Left ventricle myocardium inferior (tissue), 1 donor: ENCODE measurements at regions of chr2 and their contacts with region 1.

Region 1: DNA sequence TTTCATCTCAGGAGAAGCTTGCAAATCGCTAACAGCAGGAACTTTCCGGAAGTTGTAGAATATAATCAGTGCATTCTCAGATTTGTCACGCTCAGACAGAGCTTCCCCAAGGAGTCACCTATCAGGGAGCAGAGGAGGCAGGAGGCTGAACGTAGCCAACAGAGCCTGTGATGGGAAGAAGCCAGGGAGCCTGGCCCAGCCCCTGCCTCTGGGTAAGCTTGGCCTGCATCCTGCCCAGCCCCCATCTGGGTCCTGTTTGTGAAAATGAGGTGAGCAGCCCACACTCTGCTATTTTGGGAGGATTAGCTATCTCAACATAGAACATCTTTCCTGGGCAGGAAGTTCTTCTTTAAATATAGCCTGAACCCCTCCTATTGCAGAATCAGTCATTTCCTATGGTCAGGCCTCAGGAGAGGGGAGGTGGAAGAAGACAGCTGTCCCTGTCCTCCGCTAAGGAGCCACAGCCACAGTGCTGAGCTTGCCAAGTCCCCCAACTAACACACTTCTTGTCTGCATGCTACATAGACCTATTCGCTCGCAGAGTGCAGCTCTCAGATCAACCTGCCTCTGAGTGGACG is 19.2 kb upstream of the PKDCC start:
- DNase-seq: no peak
- H3K4me3 ChIP-seq: no peak overlapping the region
- H3K27ac ChIP-seq: peak overlapping the region; percentile 71
- H3K4me1 ChIP-seq: peaks cover 44% of the 10 kb centered on the region
- H3K27me3 ChIP-seq: no peaks in the 10 kb centered on the region
- CTCF ChIP-seq: no peak

Region 2: DNA sequence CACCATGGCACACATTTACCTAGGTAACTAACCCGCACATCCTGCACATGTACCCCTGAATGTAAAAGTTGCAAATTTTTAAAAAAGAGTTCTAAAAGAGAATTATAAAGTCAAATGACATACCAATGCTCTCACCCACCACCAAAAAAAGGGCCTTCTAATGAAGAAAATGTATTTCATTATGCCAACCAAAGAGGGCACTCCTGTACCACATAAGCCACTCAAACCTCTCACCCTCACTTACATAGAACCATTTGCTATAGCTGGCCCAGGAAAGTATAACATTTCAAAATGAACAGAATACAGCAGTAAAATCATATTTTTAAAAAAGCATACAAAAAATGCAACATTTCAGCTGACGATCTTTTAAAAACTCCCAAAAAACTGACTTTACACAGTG is 222.4 kb before region 1 on chr2:
- intact Hi-C with region 1: no loop called
- DNase-seq: no peak
- H3K4me3 ChIP-seq: no peak overlapping the region
- H3K27ac ChIP-seq: no peak overlapping the region
- H3K4me1 ChIP-seq: no peaks in the 10 kb centered on the region
- H3K27me3 ChIP-seq: peaks cover 14% of the 10 kb centered on the region
- CTCF ChIP-seq: no peak

Region 3: DNA sequence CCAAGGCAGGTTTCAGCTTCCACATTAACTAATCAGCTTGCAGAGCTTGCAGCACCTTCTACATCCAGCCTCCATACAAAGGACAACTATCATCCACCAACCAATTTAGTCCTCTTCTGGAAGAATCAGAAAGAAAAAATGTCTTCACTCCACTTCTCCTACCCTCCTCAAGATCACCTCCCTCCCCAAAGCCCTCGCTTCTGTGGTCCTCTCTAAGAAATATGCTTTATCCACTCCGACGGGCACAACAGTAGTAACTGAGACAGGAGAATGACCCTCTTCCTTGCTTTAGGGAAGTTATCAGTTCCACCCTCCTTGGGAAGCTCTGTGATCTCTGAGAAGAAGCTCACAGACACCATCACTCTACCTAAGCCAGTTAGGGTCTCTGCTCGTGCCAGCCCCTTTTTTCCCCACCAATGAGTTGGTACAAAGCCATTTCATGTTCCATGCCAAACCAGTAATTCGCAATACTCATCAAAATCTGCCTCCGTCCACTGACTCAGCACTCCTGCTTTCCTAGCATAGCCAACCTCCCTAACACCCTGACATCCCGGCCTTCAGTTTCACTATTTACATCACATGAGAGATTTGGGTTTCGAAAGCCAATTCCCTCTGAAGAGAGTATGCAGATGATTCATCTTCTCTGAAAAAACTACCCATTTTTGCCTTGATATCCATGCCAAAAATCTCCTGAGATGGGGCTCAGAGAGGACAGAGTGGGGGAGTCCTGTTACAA is 94.9 kb before region 1 on chr2:
- intact Hi-C with region 1: loop called (anchors 10 kb)
- DNase-seq: no peak
- H3K4me3 ChIP-seq: no peak overlapping the region
- H3K27ac ChIP-seq: peak overlapping the region; percentile 78
- H3K4me1 ChIP-seq: peaks cover 54% of the 10 kb centered on the region
- H3K27me3 ChIP-seq: no peaks in the 10 kb centered on the region
- CTCF ChIP-seq: no peak

Region 4: DNA sequence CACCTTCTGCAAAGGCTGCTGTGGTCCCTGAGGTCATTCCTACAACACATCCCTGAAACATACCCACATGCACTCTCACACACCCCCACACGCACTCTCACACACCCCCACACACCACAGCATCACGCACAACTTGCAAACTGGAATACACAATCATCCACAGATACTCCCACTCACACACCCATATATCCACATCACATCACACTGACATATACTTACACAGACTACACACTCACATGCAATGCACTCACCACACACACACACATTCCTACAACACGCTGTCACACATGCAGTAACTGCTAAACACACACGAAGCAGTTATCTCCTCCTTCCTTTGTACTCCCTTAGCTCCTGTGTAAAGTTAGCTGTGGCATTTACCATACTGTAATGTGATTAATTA is 38.0 kb before region 1 on chr2:
- intact Hi-C with region 1: no loop called
- DNase-seq: no peak
- H3K4me3 ChIP-seq: no peak overlapping the region
- H3K27ac ChIP-seq: no peak overlapping the region
- H3K4me1 ChIP-seq: peaks cover 17% of the 10 kb centered on the region
- H3K27me3 ChIP-seq: no peaks in the 10 kb centered on the region
- CTCF ChIP-seq: no peak

Region 5: GRCh38 chr2:42048299-42049220 is 19.9 kb after region 1 on chr2:
- intact Hi-C with region 1: no loop called
- DNase-seq: no peak
- H3K4me3 ChIP-seq: peak overlapping the region; percentile 87
- H3K27ac ChIP-seq: peak overlapping the region; percentile 91
- H3K4me1 ChIP-seq: peaks cover 66% of the 10 kb centered on the region
- H3K27me3 ChIP-seq: no peaks in the 10 kb centered on the region
- CTCF ChIP-seq: no peak